Caco-2 (cell line): ENCODE measurements at regions of chr10 and their contacts with region 1.

Region 1: GRCh38 chr10:69679736-69680135 is 49.7 kb downstream of the FAM241B start:
- DNase-seq: no peak
- H3K4me3 ChIP-seq: no peak overlapping the region
- H3K4me3 Mint-ChIP-seq: no peak overlapping the region
- H3K27ac Mint-ChIP-seq: no peak overlapping the region
- H3K4me1 ChIP-seq: peaks cover 12% of the 10 kb centered on the region
- H3K4me1 Mint-ChIP-seq: peaks cover 3% of the 10 kb centered on the region
- H3K27me3 ChIP-seq: peaks cover 2% of the 10 kb centered on the region; the same call in 1 of the 2 replicates
- H3K27me3 Mint-ChIP-seq: peaks cover 24% of the 10 kb centered on the region
- CTCF ChIP-seq: no peak

Region 2: DNA sequence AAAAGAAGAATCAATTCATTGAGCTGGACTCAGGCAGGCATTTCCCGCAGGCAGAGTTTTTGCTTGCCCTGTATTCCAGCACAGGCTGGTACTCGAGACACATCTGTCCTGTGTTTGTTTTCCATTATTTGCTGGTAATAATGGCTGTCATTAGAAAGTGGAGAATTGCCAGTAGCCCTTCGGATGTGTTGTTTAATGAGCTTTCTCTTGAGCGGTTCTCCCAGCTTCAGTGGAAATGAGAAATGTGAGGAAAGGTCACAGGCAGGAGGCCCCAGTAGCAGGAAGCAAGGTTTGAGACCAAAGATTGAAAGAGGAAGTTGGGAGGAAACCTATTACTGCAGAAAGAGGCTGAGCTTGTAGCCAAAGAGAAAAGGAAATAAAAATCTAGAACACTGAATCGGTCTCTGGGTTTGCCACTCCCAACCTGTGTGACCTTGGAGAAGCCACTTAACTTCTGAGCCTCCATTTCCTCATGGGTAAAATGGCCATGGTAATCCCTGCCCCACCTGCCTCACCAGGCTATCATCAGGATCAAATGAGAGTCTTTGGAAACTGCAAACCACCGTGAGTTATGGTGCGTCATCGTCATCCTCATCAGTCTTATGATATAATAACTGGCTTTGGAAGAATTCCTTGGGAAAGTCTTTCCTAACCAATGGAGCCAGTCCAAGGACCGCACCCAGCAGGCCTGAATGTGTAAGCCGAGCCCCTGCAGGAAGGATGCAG is 330.8 kb before region 1 on chr10:
- CTCF ChIA-PET with region 1: no interaction called
- POLR2A ChIA-PET with region 1: no interaction called
- intact Hi-C with region 1: no loop called
- DNase-seq: no peak
- H3K4me3 ChIP-seq: no peak overlapping the region
- H3K4me3 Mint-ChIP-seq: no peak overlapping the region
- H3K27ac Mint-ChIP-seq: no peak overlapping the region
- H3K4me1 ChIP-seq: peaks cover 15% of the 10 kb centered on the region
- H3K4me1 Mint-ChIP-seq: peaks cover 32% of the 10 kb centered on the region
- H3K27me3 ChIP-seq: no peaks in the 10 kb centered on the region
- H3K27me3 Mint-ChIP-seq: no peaks in the 10 kb centered on the region
- CTCF ChIP-seq: no peak

Region 3: DNA sequence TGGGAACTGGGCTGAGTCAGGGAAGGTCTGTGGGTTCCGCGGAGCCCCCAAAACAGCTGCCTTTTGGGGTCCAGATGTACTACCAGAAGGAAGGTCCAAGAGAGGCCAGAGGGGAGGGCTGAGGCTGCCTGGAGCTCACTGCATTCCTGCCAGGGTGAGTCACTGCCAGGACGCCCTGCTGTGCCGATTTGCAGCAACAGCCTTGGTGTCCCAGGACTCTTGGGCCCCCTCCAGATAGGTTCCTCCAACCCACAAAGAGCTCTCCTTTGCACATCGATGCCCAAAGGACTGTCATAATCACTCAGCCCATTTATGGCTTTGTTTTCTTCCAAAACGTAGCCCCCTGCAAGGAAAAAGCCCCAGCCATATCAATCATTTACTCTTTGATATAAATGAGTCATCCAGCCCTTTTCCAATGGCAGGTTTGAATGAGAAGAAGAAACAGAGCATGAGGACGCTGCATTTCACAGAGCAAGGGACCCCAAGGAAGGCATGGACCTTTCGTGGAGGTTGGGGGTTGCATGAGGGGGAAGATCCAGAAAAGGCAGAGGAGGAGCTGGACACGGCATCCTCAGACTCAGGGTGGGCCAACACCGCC is 89.8 kb after region 1 on chr10:
- CTCF ChIA-PET with region 1: interaction called, 13 read pairs
- POLR2A ChIA-PET with region 1: no interaction called
- intact Hi-C with region 1: no loop called
- DNase-seq: peak in 1 of 2 experiments; percentile 28
- H3K4me3 ChIP-seq: no peak overlapping the region
- H3K4me3 Mint-ChIP-seq: no peak overlapping the region
- H3K27ac Mint-ChIP-seq: no peak overlapping the region
- H3K4me1 ChIP-seq: peaks cover 5% of the 10 kb centered on the region; the same call in 1 of the 2 replicates
- H3K4me1 Mint-ChIP-seq: no peaks in the 10 kb centered on the region
- H3K27me3 ChIP-seq: no peaks in the 10 kb centered on the region; the same call in none of the 2 replicates
- H3K27me3 Mint-ChIP-seq: peaks cover 17% of the 10 kb centered on the region
- CTCF ChIP-seq: no peak